ENCODE measurements at regions of chr3 and their contacts with region 1.

Region 1: DNA sequence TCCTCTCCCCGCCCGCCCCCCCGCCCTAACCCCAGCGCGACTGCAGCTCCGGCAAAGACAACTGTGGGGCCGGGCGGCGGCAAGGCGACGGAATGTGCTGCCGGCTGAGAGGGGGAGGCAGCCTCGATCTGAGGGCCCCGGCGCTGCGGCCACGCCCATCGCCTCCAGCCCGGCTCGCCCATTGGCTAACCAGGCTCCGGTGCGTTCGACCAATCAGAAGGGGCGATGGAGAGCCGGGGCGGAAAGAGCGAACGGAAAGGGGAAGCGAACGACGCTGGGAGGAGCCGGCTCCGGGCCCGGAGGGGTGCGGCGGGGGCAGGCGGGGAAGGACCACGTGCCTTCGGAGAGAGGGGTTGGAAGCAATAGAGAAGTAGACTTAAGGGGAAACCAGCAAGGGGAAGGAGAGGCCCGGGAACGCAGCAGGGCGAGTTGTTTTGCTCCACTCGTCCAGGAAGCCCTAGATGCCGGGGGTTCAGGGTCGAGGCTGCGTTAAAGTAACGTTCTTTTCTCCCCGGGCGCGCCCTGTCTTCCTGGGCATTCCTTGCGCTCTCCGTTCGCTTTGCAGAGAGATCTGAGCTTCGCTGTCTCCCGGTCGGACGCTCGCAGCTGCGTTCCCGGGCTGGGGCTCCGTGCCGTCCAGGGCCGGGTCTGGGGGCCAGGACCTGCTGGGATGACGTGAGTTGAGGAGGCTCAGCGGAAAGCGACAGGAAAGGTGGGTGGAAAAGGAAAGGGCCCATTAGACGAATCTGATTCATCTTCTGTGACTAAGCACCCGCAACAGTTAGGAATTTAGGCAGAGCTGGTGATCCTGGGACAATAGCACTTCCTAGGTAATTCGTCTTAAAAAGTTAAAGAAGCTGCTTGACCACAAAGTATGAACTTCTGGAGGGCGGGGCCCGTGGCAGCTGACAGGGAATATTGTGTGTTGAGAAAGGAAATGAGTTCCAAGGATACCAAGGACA is at the start of gene KPNA4:
- DNase-seq: peak; percentile 94 to 98 (median 97)
- ATAC-seq: peak; percentile 88 to 89
- H3K4me3 Mint-ChIP-seq: peak within 1 kb of the TSS; percentile 93 to 98 (median 96)
- H3K27ac Mint-ChIP-seq: peak within 1 kb of the TSS; percentile 93 to 99 (median 96)
- H3K4me1 Mint-ChIP-seq: peaks cover 30 to 57% (median 52%) of the 10 kb centered on the region in 4 donors
- H3K27me3 Mint-ChIP-seq: no peaks in the 10 kb centered on the region
- polyA plus RNA-seq, gene KPNA4: 6.2 to 8.1 (median 6.3) TPM

Region 2: GRCh38 chr3:160449636-160450598 is 115.8 kb before region 1 on chr3 and contains the start of gene TRIM59:
- POLR2A ChIA-PET with region 1: interaction called, 14 read pairs
- DNase-seq: peak; percentile 84 to 97 (median 94)
- ATAC-seq: peak; percentile 96 to 97
- H3K4me3 Mint-ChIP-seq: peak within 1 kb of the TSS; percentile 91 to 100 (median 94)
- H3K27ac Mint-ChIP-seq: peak within 1 kb of the TSS; percentile 88 to 98 (median 94)
- H3K4me1 Mint-ChIP-seq: peaks cover 16 to 39% (median 30%) of the 10 kb centered on the region in 4 donors
- H3K27me3 Mint-ChIP-seq: no peaks in the 10 kb centered on the region
- polyA plus RNA-seq, gene TRIM59: 12.4 to 17.4 (median 14.7) TPM

Measured in naive thymus-derived CD8-positive, alpha-beta T cell (primary cell).